ENCODE measurements at regions of chr19 and their contacts with region 1.

Region 1: DNA sequence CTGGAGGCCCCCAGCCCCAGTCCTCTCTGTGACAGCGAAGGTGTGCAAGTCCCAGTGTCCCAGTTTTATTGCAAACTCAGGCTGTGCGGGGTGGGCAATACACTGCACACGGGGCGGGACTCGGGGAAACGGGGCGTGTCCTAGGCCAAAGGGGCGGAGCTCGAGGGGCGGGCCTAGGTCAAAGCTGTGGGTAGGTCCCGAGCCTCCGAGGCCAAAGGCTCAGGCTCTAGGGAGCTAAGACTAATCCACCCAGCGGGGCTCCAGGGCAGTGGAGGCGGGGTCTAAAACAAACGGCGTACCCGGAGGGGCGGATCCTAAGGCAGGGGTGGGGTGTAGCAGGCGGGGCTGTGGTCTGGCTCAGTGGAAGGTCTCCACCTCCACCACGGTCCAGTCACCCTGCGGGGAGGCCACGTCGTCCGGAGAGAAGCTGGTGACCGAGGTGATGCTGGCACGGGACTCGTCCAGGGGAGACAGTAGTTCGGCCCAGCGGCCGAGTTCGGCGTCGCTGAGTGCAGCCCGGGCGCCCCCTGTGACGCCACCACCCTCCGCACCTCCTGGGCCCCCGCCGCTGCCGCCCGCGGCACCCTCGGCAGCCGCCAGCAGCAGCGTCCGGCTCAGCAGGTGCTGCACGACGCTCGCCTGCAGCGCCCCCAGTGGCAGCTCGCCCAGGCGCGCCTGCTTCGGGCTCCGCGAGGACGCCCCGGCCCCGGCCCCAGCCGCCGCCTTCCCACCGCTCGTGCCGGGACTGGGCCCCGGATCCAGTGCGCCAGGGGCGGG is 5.3 kb downstream of the PRR36 start:
- DNase-seq: peak; percentile 94
- ATAC-seq: peak; percentile 71
- H3K4me3 ChIP-seq: peak overlapping the region in 4 of 5 experiments; percentile 48 to 63 (median 56)
- H3K4me3 Mint-ChIP-seq: peak overlapping the region; percentile 86
- H3K27ac ChIP-seq: peak overlapping the region; percentile 29 to 48
- H3K27ac Mint-ChIP-seq: peak overlapping the region; percentile 65
- H3K4me1 ChIP-seq: peaks cover 40 to 47% of the 10 kb centered on the region in 2 donors
- H3K4me1 Mint-ChIP-seq: peaks cover 37% of the 10 kb centered on the region
- H3K27me3 ChIP-seq: peaks cover 0 to 82% (median 25%) of the 10 kb centered on the region in 4 experiments
- H3K27me3 Mint-ChIP-seq: peaks cover 32% of the 10 kb centered on the region
- CTCF ChIP-seq: peak; percentile 95

Region 2: GRCh38 chr19:7852851-7853769 is 15.8 kb before region 1 on chr19:
- CTCF ChIA-PET with region 1: interaction called, 15 read pairs
- POLR2A ChIA-PET with region 1: no interaction called
- intact Hi-C with region 1: no loop called
- DNase-seq: peak; percentile 81
- ATAC-seq: peak; percentile 89
- H3K4me3 ChIP-seq: no peak overlapping the region
- H3K4me3 Mint-ChIP-seq: no peak overlapping the region
- H3K27ac ChIP-seq: no peak overlapping the region
- H3K27ac Mint-ChIP-seq: no peak overlapping the region
- H3K4me1 ChIP-seq: peaks cover 6 to 7% of the 10 kb centered on the region in 2 donors
- H3K4me1 Mint-ChIP-seq: peaks cover 8% of the 10 kb centered on the region
- H3K27me3 ChIP-seq: peaks cover 0 to 33% (median 0%) of the 10 kb centered on the region in 4 experiments
- H3K27me3 Mint-ChIP-seq: peaks cover 3% of the 10 kb centered on the region
- CTCF ChIP-seq: peak; percentile 86

Region 3: GRCh38 chr19:7883105-7883504 is 14.2 kb after region 1 on chr19:
- CTCF ChIA-PET with region 1: interaction called, 10 read pairs
- POLR2A ChIA-PET with region 1: no interaction called
- intact Hi-C with region 1: no loop called
- DNase-seq: no peak
- ATAC-seq: no peak
- H3K4me3 ChIP-seq: no peak overlapping the region
- H3K4me3 Mint-ChIP-seq: no peak overlapping the region
- H3K27ac ChIP-seq: no peak overlapping the region
- H3K27ac Mint-ChIP-seq: no peak overlapping the region
- H3K4me1 ChIP-seq: no peaks in the 10 kb centered on the region
- H3K4me1 Mint-ChIP-seq: no peaks in the 10 kb centered on the region
- H3K27me3 ChIP-seq: peaks cover 0 to 13% (median 1%) of the 10 kb centered on the region in 4 experiments
- H3K27me3 Mint-ChIP-seq: peaks cover 5% of the 10 kb centered on the region
- CTCF ChIP-seq: no peak

Region 4: GRCh38 chr19:7903244-7904073 is 34.6 kb after region 1 on chr19 and contains the start of gene MAP2K7:
- CTCF ChIA-PET with region 1: interaction called, 8 read pairs
- POLR2A ChIA-PET with region 1: interaction called, 5 read pairs
- intact Hi-C with region 1: loop called (anchors 1 kb)
- DNase-seq: peak; percentile 100
- ATAC-seq: peak; percentile 89
- H3K4me3 ChIP-seq: peak within 1 kb of the TSS; percentile 53 to 79 (median 73)
- H3K4me3 Mint-ChIP-seq: peak within 1 kb of the TSS; percentile 95
- H3K27ac ChIP-seq: peak within 1 kb of the TSS; percentile 67 to 82
- H3K27ac Mint-ChIP-seq: peak within 1 kb of the TSS; percentile 99
- H3K4me1 ChIP-seq: peaks cover 20 to 21% of the 10 kb centered on the region in 2 donors
- H3K4me1 Mint-ChIP-seq: peaks cover 29% of the 10 kb centered on the region
- H3K27me3 ChIP-seq: no peaks in the 10 kb centered on the region
- H3K27me3 Mint-ChIP-seq: no peaks in the 10 kb centered on the region
- CTCF ChIP-seq: peak; percentile 66
- total RNA-seq, gene MAP2K7: 71.9 and 76.3 TPM in 2 replicates